RWPE1 (cell line): ENCODE measurements at regions of chr10 and their contacts with region 1.

Region 1: GRCh38 chr10:12568391-12569009 is 219.2 kb downstream of the CAMK1D start:
- DNase-seq: no peak
- H3K27ac ChIP-seq: no peak overlapping the region
- CTCF ChIP-seq: no peak

Region 2: GRCh38 chr10:12588120-12588860 is 19.8 kb after region 1 on chr10:
- CTCF ChIA-PET with region 1: no interaction called
- POLR2A ChIA-PET with region 1: interaction called, 13 read pairs
- DNase-seq: peak; percentile 58
- H3K27ac ChIP-seq: no peak overlapping the region
- CTCF ChIP-seq: no peak